ENCODE measurements at regions of chr14 and their contacts with region 1.

Region 1: GRCh38 chr14:22852940-22853767 is 16.8 kb downstream of the MMP14 start:
- DNase-seq: peak; percentile 81
- H3K4me3 Mint-ChIP-seq: peak overlapping the region; percentile 70
- H3K27ac Mint-ChIP-seq: peak overlapping the region; percentile 64
- H3K4me1 Mint-ChIP-seq: peaks cover 25% of the 10 kb centered on the region
- H3K27me3 Mint-ChIP-seq: no peaks in the 10 kb centered on the region
- CTCF ChIP-seq: peak; percentile 85

Region 2: GRCh38 chr14:22556990-22557623 is 296.0 kb before region 1 on chr14:
- CTCF ChIA-PET with region 1: interaction called, 75 read pairs
- POLR2A ChIA-PET with region 1: interaction called, 4 read pairs
- intact Hi-C with region 1: loop called (anchors 1 kb)
- DNase-seq: peak; percentile 78
- H3K4me3 Mint-ChIP-seq: peak overlapping the region; percentile 62
- H3K27ac Mint-ChIP-seq: peak overlapping the region; percentile 46
- H3K4me1 Mint-ChIP-seq: peaks cover 22% of the 10 kb centered on the region
- H3K27me3 Mint-ChIP-seq: no peaks in the 10 kb centered on the region
- CTCF ChIP-seq: peak; percentile 98

Region 3: DNA sequence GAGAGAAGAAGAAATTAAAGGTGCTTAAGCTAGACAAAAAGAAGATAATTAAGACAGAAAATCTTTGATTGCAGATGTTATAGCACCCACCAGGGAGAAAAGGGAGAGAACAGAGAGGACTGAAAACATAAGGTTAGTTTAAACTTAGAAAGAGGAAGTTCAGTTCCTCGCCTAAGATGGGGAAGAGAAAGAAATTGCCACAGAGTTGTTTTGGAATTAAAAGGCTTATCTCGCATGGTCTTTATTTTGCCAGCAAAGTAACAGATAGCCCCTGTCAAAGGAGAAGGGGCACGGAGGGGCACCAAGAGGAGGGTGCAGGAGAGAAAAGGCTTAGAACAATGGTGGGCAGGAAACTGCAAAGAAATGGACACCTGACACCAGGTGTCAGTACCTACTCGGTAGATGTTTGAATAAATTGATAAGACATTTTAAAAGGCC is 104.5 kb before region 1 on chr14:
- CTCF ChIA-PET with region 1: interaction called, 16 read pairs
- POLR2A ChIA-PET with region 1: no interaction called
- intact Hi-C with region 1: no loop called
- DNase-seq: no peak
- H3K4me3 Mint-ChIP-seq: no peak overlapping the region
- H3K27ac Mint-ChIP-seq: no peak overlapping the region
- H3K4me1 Mint-ChIP-seq: no peaks in the 10 kb centered on the region
- H3K27me3 Mint-ChIP-seq: no peaks in the 10 kb centered on the region
- CTCF ChIP-seq: no peak

Region 4: DNA sequence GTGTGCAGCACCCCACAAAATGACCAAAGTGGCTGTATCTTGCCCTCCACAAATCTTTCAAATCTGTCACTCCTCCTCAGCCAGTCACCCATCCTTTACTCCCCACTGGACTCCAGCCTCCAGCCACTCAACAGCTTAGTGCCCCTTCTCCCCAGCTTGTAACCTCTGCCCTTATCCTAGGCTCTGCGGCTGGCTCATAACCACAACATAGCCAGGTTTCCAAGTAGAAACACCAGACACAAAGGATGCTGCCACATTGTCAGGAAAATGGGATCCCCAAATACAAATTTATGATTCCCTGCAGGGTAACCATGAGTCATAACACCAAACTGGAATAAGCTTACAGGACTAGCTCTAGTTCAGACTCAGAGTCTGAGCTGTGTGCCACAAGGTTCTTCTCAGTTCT is 71.6 kb before region 1 on chr14:
- CTCF ChIA-PET with region 1: interaction called, 36 read pairs
- POLR2A ChIA-PET with region 1: no interaction called
- intact Hi-C with region 1: loop called (anchors 1 kb)
- DNase-seq: no peak
- H3K4me3 Mint-ChIP-seq: no peak overlapping the region
- H3K27ac Mint-ChIP-seq: no peak overlapping the region
- H3K4me1 Mint-ChIP-seq: no peaks in the 10 kb centered on the region
- H3K27me3 Mint-ChIP-seq: no peaks in the 10 kb centered on the region
- CTCF ChIP-seq: no peak

Region 5: DNA sequence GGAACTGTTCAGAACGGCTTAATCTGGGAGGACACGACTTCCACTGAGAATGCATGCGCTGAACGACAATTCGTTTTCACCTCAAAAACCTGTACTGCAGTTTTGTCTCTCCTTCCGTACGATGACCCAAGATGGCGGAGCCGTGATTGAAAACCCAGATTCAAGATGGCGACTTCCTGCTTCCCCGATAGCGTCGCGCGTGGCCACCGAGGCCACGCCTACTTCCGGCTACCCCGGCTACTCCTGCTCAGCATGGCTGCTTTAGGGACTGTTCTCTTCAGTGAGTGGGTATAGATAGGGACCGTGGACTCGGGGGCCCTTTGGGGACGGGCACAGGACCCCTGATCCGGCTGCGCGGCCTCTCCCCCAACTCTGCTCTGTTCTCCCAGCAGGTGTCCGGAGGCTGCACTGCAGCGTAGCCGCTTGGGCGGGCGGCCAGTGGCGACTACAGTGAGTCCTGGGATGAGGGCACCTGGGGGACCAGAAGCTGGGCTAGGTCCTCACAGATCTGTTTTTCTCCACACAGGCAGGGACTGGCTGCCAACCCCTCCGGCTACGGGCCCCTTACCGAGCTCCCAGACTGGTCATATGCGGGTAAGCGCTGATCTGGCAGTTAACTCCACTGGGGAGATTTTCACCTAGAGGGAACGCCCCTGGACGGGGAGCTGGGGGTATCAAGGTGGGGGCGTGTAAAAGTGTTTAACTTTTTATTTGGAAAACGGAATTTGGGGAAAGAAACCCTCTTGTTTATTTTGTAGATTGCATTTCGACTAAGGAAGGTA is 23.3 kb before region 1 on chr14 and contains the start of gene MRPL52:
- CTCF ChIA-PET with region 1: interaction called, 330 read pairs
- POLR2A ChIA-PET with region 1: interaction called, 20 read pairs
- intact Hi-C with region 1: no loop called
- DNase-seq: peak; percentile 88
- H3K4me3 Mint-ChIP-seq: peak within 1 kb of the TSS; percentile 95
- H3K27ac Mint-ChIP-seq: peak within 1 kb of the TSS; percentile 76
- H3K4me1 Mint-ChIP-seq: peaks cover 9% of the 10 kb centered on the region
- H3K27me3 Mint-ChIP-seq: no peaks in the 10 kb centered on the region
- CTCF ChIP-seq: no peak
- total RNA-seq, gene MRPL52: 172 and 186 TPM in 2 replicates

Region 6: GRCh38 chr14:22886500-22887259 is 33.5 kb after region 1 on chr14:
- CTCF ChIA-PET with region 1: interaction called, 16 read pairs
- POLR2A ChIA-PET with region 1: interaction called, 3 read pairs
- intact Hi-C with region 1: no loop called
- DNase-seq: peak; percentile 82
- H3K4me3 Mint-ChIP-seq: peak overlapping the region; percentile 95
- H3K27ac Mint-ChIP-seq: peak overlapping the region; percentile 90
- H3K4me1 Mint-ChIP-seq: peaks cover 25% of the 10 kb centered on the region
- H3K27me3 Mint-ChIP-seq: no peaks in the 10 kb centered on the region
- CTCF ChIP-seq: no peak

Region 7: GRCh38 chr14:23518709-23519108 is 665.6 kb after region 1 on chr14:
- CTCF ChIA-PET with region 1: no interaction called
- POLR2A ChIA-PET with region 1: no interaction called
- intact Hi-C with region 1: no loop called
- DNase-seq: no peak
- H3K4me3 Mint-ChIP-seq: no peak overlapping the region
- H3K27ac Mint-ChIP-seq: no peak overlapping the region
- H3K4me1 Mint-ChIP-seq: no peaks in the 10 kb centered on the region
- H3K27me3 Mint-ChIP-seq: no peaks in the 10 kb centered on the region
- CTCF ChIP-seq: no peak